ENCODE measurements at regions of chr3 and their contacts with region 1.

Region 1: GRCh38 chr3:43584043-43584826 is 37.6 kb downstream of the ANO10 start:
- DNase-seq: no peak
- H3K4me3 ChIP-seq: no peak overlapping the region
- H3K27ac ChIP-seq: no peak overlapping the region
- H3K4me1 ChIP-seq: no peaks in the 10 kb centered on the region
- H3K27me3 ChIP-seq: no peaks in the 10 kb centered on the region
- CTCF ChIP-seq: no peak

Region 2: DNA sequence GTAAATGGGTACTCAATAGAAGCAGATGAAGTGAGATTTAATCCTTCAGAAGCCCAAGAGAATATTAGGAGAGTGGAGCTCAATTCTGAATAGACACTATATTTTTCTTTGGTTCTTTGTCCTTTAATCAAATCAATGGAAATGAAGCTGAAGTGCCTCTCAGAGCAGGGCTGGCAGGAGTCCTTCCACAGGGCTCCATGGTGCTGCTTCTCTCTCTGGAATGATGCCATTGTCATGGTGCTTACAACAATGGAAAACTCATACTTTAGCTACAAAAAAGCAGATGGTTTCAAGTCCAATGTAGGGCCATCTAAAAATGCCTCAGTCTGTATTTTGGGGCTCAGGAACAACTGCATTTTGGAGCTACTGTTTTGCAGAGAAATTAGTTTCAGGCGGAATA is 172.8 kb before region 1 on chr3:
- CTCF ChIA-PET with region 1: no interaction called
- POLR2A ChIA-PET with region 1: no interaction called
- intact Hi-C with region 1: no loop called
- DNase-seq: no peak
- H3K4me3 ChIP-seq: no peak overlapping the region
- H3K27ac ChIP-seq: no peak overlapping the region
- H3K4me1 ChIP-seq: no peaks in the 10 kb centered on the region
- H3K27me3 ChIP-seq: no peaks in the 10 kb centered on the region
- CTCF ChIP-seq: no peak

Region 3: GRCh38 chr3:43894176-43895049 is 310.2 kb after region 1 on chr3:
- CTCF ChIA-PET with region 1: no interaction called
- POLR2A ChIA-PET with region 1: interaction called, 11 read pairs
- intact Hi-C with region 1: no loop called
- DNase-seq: peak in 1 of 2 experiments; percentile 58
- H3K4me3 ChIP-seq: peak overlapping the region; percentile 52
- H3K27ac ChIP-seq: no peak overlapping the region
- H3K4me1 ChIP-seq: no peaks in the 10 kb centered on the region
- H3K27me3 ChIP-seq: no peaks in the 10 kb centered on the region
- CTCF ChIP-seq: no peak

Measured in PC-9 (cell line).